ENCODE measurements at regions of chr11 and their contacts with region 1.

Region 1: DNA sequence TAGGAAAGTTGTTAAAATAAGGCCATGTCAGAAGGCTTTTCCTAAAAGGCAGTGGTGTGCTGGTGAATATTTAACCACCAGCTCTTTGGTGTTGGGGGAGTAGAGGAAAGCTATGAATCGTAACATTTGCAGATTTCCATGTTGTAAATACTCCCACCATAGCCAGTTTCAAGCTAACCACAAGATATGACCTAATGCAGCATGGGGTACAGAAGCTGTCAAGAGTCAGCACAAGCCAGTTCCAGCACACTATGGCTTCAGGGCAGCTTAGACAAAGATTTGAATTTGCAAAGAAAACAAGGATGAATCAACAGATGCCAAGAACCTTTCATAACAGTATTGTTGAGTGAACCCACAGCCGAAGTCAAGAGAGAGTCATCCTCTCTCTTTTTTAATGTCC is 40.0 kb downstream of the COMMD9 start:
- DNase-seq: peak in 1 of 7 donors; percentile 16
- H3K4me3 ChIP-seq: no peak overlapping the region
- H3K27ac ChIP-seq: no peak overlapping the region
- H3K4me1 ChIP-seq: peaks cover 0 to 4% of the 10 kb centered on the region in 2 donors
- H3K27me3 ChIP-seq: no peaks in the 10 kb centered on the region
- CTCF ChIP-seq: no peak
- POLR2A ChIP-seq: no peak

Region 2: DNA sequence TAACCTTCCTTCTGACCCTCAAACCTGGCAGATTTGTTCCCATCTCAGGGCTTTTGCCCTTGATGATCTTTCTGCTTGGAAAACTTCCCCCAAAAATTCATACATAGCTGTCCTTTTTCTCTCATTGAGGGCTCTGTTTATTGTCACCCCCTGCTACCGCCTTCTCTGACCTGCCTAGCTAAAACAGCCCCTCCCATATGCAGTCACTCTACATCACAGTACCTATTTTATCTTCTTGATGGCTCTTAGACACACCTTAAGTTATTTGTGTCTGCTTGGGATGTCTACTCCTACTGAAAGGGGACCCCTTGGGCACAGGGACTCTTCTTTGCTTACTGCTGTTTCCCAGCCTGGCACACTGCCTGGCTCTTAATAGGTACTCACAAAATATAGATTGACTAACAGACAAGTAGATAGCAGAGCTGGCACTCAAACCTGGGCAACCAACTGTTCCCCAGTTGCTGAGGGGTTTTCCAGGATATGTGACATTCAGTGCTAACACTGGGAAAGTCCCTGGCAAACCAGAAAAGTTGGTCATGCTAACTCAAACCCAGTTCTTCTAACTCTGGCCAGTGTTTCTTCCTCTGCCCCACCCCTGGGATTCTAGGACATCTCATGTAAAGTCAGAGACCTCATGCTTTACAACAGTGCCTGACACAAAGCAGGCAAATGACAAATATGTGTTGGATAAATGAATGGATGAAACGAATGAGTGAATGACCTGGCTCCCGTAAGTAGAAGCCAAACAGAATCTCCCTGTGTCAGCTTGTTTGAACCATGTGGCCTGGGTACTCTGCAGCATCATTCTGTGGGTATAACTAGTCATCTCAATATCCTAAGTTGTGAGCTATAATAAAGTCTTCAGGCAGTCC is 650.8 kb before region 1 on chr11:
- intact Hi-C with region 1: no loop called
- DNase-seq: no peak
- H3K4me3 ChIP-seq: no peak overlapping the region
- H3K27ac ChIP-seq: no peak overlapping the region
- H3K4me1 ChIP-seq: no peaks in the 10 kb centered on the region
- H3K27me3 ChIP-seq: no peaks in the 10 kb centered on the region
- CTCF ChIP-seq: no peak
- POLR2A ChIP-seq: no peak

Region 3: GRCh38 chr11:35740061-35740799 is 509.0 kb before region 1 on chr11:
- intact Hi-C with region 1: no loop called
- DNase-seq: peak in 2 of 7 donors; percentile 18 to 27
- H3K4me3 ChIP-seq: no peak overlapping the region
- H3K27ac ChIP-seq: no peak overlapping the region
- H3K4me1 ChIP-seq: peaks cover 0 to 17% of the 10 kb centered on the region in 2 donors
- H3K27me3 ChIP-seq: no peaks in the 10 kb centered on the region
- CTCF ChIP-seq: no peak
- POLR2A ChIP-seq: no peak

Region 4: DNA sequence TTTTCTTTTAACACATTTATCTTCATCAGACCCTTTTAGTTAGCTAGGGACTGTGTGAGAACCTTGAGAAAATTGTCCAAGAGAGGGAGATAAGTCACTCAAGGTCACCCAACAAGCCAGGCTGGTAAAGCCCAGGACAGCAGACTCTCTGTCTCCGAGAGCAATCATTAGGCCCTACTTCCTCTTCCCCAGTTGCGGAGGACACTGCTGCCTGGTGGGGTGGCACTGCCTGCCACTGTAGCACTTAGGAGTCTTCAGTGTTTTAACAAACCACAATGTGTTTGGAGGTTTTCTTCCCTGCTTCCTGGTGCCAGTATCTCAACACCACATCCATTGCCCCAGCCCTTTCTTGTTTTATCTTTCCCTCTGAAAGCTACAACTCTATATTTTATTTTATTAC is 437.5 kb before region 1 on chr11:
- intact Hi-C with region 1: no loop called
- DNase-seq: peak in 4 of 7 donors; percentile 23 to 34 (median 30)
- H3K4me3 ChIP-seq: no peak overlapping the region
- H3K27ac ChIP-seq: no peak overlapping the region
- H3K4me1 ChIP-seq: peaks cover 0 to 29% of the 10 kb centered on the region in 2 donors
- H3K27me3 ChIP-seq: no peaks in the 10 kb centered on the region
- CTCF ChIP-seq: no peak
- POLR2A ChIP-seq: no peak

Region 5: DNA sequence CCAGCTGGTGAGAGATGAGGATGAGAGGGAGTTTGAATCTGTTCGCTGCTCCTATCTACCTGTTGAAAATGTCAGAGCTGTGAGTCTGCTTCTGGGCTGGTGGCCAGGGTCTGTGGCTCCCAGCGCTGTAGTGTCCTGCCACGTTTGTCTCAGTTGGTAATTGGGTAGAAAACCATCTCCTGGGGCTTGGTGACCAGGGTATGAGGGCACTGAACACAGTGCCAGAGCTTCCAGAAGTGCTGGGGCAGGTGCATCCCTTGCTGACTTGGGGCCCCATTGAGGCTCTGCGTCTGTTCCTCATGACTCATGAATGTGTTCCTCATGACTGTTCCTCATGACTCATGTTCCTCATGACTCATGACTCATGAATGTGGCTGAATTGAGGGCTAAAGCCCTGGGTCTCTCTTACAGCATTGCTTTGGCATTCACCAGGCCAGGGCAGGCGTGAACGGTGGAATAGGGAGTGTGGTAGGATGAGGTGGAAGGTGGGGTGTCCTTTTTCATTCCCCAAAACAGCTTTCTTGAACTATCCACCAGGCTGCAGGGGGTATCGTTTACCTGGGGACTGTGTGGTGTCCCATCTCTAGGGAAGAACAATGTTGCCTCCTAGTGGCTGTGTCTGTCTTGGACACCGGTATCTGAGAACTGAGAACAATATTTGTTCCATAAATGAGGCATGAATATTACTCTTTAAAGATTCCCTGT is 99.6 kb before region 1 on chr11:
- intact Hi-C with region 1: loop called in 1 of 2 experiments (anchors 10 kb)
- DNase-seq: peak; percentile 67 to 87 (median 84)
- H3K4me3 ChIP-seq: no peak overlapping the region
- H3K27ac ChIP-seq: peak overlapping the region in 3 of 5 donors; percentile 25 to 76 (median 48)
- H3K4me1 ChIP-seq: peaks cover 10 to 12% of the 10 kb centered on the region in 2 donors
- H3K27me3 ChIP-seq: no peaks in the 10 kb centered on the region
- CTCF ChIP-seq: peak; percentile 27 to 67 (median 51)
- POLR2A ChIP-seq: peak in 1 of 2 donors; percentile 63

Region 6: DNA sequence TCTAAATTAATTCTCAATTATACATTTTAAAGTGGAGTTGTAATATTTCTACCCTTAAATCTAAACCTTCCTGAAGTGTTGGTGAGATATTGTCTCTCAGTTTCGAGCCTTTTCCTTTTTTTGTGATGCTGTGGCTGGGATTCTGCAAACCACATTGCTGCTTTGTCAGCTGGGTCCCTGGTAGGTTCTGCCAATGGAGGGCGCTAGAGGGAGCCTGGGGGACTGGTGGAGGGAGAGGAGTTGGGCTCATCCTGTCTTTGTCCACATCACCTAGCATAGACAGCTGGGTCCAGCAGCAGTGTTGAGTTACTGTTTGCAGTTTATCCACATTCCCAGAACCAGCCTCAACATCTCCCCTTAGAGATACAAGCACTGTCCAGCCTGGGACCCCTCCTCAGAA is 219.8 kb after region 1 on chr11:
- intact Hi-C with region 1: no loop called
- DNase-seq: no peak
- H3K4me3 ChIP-seq: no peak overlapping the region
- H3K27ac ChIP-seq: no peak overlapping the region
- H3K4me1 ChIP-seq: no peaks in the 10 kb centered on the region
- H3K27me3 ChIP-seq: no peaks in the 10 kb centered on the region
- CTCF ChIP-seq: peak in 1 of 6 experiments; percentile 5
- POLR2A ChIP-seq: no peak

Measured in adrenal gland (tissue), 19 donors.